Activated B cell treated with CpG ODN at 0.5 μM for 24 hours (primary cell): ENCODE measurements at regions of chr1 and their contacts with region 1.

Region 1: DNA sequence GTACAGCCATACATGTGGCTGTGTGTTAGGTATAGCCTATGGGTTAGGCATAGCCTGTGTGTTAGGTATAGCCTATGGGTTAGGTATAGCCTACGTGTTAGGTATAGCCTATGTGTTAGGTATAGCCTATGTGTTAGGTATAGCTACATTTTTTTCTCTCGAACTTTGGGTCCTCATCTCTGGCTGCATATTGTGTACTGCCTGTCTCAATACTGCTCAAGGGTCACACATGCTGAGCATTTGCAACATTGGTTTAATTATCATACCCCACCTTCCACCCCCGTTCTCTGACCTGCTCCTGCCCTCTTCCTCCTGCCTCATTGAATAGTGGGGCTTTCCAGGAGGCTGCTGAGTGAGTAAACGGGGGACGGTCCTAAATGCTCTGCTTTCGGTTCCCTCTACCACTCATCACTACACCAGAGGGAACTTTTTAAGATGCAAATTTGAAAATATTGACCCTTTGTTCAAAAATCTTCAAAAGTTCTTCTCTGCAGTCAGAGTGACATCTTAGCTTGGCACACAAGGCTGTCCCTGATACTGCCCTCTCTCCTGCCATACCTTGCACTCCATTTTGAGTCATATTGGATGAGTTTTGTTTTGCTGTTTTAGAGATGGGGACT is 17.8 kb downstream of the OR2B11 start:
- DNase-seq: peak; percentile 26
- ATAC-seq: peak; percentile 96
- H3K4me3 Mint-ChIP-seq: peak overlapping the region; percentile 52
- H3K27ac Mint-ChIP-seq: peak overlapping the region; percentile 74
- H3K4me1 Mint-ChIP-seq: peaks cover 63% of the 10 kb centered on the region
- H3K27me3 Mint-ChIP-seq: no peaks in the 10 kb centered on the region
- CTCF ChIP-seq: no peak

Region 2: GRCh38 chr1:247357781-247358211 is 82.3 kb before region 1 on chr1:
- CTCF ChIA-PET with region 1: no interaction called
- POLR2A ChIA-PET with region 1: no interaction called
- intact Hi-C with region 1: loop called (anchors 1 kb)
- DNase-seq: no peak
- ATAC-seq: peak; percentile 93
- H3K4me3 Mint-ChIP-seq: peak overlapping the region; percentile 64
- H3K27ac Mint-ChIP-seq: peak overlapping the region; percentile 61
- H3K4me1 Mint-ChIP-seq: peaks cover 26% of the 10 kb centered on the region
- H3K27me3 Mint-ChIP-seq: peaks cover 39% of the 10 kb centered on the region
- CTCF ChIP-seq: no peak

Region 3: GRCh38 chr1:247409869-247410544 is 30.1 kb before region 1 on chr1:
- CTCF ChIA-PET with region 1: no interaction called
- POLR2A ChIA-PET with region 1: interaction called, 7 read pairs
- intact Hi-C with region 1: loop called (anchors 1 kb)
- DNase-seq: no peak
- ATAC-seq: peak; percentile 79
- H3K4me3 Mint-ChIP-seq: peak overlapping the region; percentile 63
- H3K27ac Mint-ChIP-seq: peak overlapping the region; percentile 69
- H3K4me1 Mint-ChIP-seq: peaks cover 33% of the 10 kb centered on the region
- H3K27me3 Mint-ChIP-seq: no peaks in the 10 kb centered on the region
- CTCF ChIP-seq: no peak

Region 4: DNA sequence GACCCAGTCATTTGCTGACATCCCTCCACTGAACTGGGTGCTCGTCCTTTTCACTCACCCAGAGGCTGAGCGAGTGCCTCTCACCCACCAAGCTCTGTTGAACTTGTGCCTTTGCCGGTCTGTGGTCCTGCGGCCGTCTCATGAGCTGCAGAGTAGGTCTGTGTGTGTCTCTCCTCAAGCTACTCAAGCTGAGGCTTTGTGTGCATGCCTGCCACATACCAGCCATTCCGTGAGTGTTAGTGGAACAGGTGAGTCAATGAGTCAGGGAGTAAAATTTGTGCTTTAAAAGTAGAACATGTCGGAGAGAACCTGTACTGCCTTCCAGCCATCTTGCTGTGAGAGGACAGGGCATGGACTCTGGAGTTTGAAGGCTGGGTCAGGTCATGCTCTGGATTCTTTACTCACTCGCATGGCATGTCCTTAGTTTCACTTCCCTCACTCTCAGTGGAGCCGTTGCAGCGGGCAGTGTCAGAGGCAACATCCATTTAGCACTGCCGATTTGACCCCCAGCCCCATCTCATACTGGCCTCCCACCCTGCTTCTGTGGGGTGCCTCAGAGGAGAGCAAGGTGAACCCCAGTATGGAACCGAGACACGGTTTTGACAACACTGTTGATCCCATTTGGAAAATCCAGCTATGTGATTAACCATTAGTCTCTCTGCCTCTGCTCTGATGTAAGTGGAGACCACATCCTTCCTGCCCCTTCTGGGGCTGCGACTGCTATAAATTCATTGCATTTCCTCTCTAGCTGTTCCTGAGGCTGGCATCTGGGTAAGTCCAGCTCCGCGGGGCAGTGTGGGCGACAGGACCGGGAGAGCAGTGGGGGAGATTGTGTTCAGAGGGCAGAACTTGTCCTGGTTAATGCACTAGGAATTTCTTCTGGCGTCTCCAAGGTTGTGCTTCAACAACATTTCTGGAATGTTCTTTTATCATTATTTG is 24.4 kb before region 1 on chr1 and contains the start of gene NLRP3:
- CTCF ChIA-PET with region 1: no interaction called
- POLR2A ChIA-PET with region 1: interaction called, 7 read pairs
- intact Hi-C with region 1: loop called (anchors 1 kb)
- DNase-seq: no peak
- ATAC-seq: peak; percentile 76
- H3K4me3 Mint-ChIP-seq: peak within 1 kb of the TSS; percentile 79
- H3K27ac Mint-ChIP-seq: peak within 1 kb of the TSS; percentile 32
- H3K4me1 Mint-ChIP-seq: peaks cover 35% of the 10 kb centered on the region
- H3K27me3 Mint-ChIP-seq: no peaks in the 10 kb centered on the region
- CTCF ChIP-seq: no peak
- total RNA-seq, gene NLRP3: 0.44 and 0.73 TPM in 2 replicates

Region 5: GRCh38 chr1:247475793-247476192 is 35.7 kb after region 1 on chr1:
- CTCF ChIA-PET with region 1: no interaction called
- POLR2A ChIA-PET with region 1: interaction called, 12 read pairs
- intact Hi-C with region 1: loop called (anchors 1 kb)
- DNase-seq: no peak
- ATAC-seq: no peak
- H3K4me3 Mint-ChIP-seq: no peak overlapping the region
- H3K27ac Mint-ChIP-seq: peak overlapping the region; percentile 95
- H3K4me1 Mint-ChIP-seq: peaks cover 40% of the 10 kb centered on the region
- H3K27me3 Mint-ChIP-seq: no peaks in the 10 kb centered on the region
- CTCF ChIP-seq: no peak

Region 6: GRCh38 chr1:247487057-247487456 is 46.9 kb after region 1 on chr1:
- CTCF ChIA-PET with region 1: interaction called, 6 read pairs
- POLR2A ChIA-PET with region 1: no interaction called
- intact Hi-C with region 1: loop called (anchors 1 kb)
- DNase-seq: peak; percentile 17
- ATAC-seq: peak; percentile 81
- H3K4me3 Mint-ChIP-seq: no peak overlapping the region
- H3K27ac Mint-ChIP-seq: no peak overlapping the region
- H3K4me1 Mint-ChIP-seq: no peaks in the 10 kb centered on the region
- H3K27me3 Mint-ChIP-seq: peaks cover 6% of the 10 kb centered on the region
- CTCF ChIP-seq: peak; percentile 55